Endothelial cell of umbilical vein (primary cell): ENCODE measurements at regions of chr14 and their contacts with region 1.

Region 1: GRCh38 chr14:61103481-61104339 is 122.7 kb downstream of the SLC38A6 start:
- DNase-seq: peak; percentile 94
- H3K4me3 ChIP-seq: peak overlapping the region in 1 of 3 experiments; percentile 17
- H3K27ac ChIP-seq: peak overlapping the region; percentile 100
- H3K4me1 ChIP-seq: peaks cover 66% of the 10 kb centered on the region
- H3K27me3 ChIP-seq: no peaks in the 10 kb centered on the region
- CTCF ChIP-seq: no peak
- POLR2A ChIP-seq: peak; percentile 52

Region 2: GRCh38 chr14:60656686-60657455 is 446.8 kb before region 1 on chr14:
- CTCF ChIA-PET with region 1: interaction called, 3 read pairs
- POLR2A ChIA-PET with region 1: no interaction called
- dilution Hi-C with region 1: no loop called
- intact Hi-C with region 1: loop called (anchors 2 kb)
- DNase-seq: peak; percentile 65
- H3K4me3 ChIP-seq: peak overlapping the region; percentile 22 to 64 (median 59)
- H3K27ac ChIP-seq: peak overlapping the region; percentile 3
- H3K4me1 ChIP-seq: peaks cover 10% of the 10 kb centered on the region
- H3K27me3 ChIP-seq: peaks cover 35 to 44% of the 10 kb centered on the region in 2 experiments
- CTCF ChIP-seq: peak; percentile 39 to 59
- POLR2A ChIP-seq: no peak

Region 3: DNA sequence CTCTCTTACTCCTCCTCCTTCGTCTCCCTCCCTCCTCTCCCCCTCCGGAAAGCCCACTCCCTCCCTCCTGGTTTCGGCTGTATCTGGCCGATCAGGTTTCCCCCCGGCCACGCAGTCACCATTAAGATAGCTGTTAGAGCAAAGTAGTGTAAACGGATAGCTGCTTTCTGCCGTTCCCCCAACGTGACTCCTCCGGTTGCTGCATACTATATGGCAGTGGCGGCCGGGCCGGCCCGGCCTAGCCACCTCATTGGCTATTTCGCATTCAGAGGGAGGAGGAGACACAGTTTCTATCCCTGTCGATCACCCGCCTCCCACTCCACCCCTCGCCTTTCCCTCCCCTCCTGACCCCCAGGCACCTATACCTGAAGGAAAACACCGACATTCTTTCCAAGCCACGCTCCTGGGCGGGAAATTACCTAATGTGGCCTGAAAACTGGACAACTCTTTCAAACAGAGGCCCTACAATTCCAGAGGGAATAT is 379.5 kb before region 1 on chr14 and contains the start of gene SIX4:
- CTCF ChIA-PET with region 1: no interaction called
- POLR2A ChIA-PET with region 1: no interaction called
- dilution Hi-C with region 1: no loop called
- intact Hi-C with region 1: loop called (anchors 2 kb)
- DNase-seq: peak; percentile 85
- H3K4me3 ChIP-seq: peak within 1 kb of the TSS; percentile 81 to 94 (median 86)
- H3K27ac ChIP-seq: peak within 1 kb of the TSS; percentile 57
- H3K4me1 ChIP-seq: peaks cover 8% of the 10 kb centered on the region
- H3K27me3 ChIP-seq: peaks cover 9 to 16% of the 10 kb centered on the region in 2 experiments
- CTCF ChIP-seq: no peak
- POLR2A ChIP-seq: peak; percentile 75
- total RNA-seq, gene SIX4: 4.7 and 7.5 TPM in 2 replicates

Region 4: DNA sequence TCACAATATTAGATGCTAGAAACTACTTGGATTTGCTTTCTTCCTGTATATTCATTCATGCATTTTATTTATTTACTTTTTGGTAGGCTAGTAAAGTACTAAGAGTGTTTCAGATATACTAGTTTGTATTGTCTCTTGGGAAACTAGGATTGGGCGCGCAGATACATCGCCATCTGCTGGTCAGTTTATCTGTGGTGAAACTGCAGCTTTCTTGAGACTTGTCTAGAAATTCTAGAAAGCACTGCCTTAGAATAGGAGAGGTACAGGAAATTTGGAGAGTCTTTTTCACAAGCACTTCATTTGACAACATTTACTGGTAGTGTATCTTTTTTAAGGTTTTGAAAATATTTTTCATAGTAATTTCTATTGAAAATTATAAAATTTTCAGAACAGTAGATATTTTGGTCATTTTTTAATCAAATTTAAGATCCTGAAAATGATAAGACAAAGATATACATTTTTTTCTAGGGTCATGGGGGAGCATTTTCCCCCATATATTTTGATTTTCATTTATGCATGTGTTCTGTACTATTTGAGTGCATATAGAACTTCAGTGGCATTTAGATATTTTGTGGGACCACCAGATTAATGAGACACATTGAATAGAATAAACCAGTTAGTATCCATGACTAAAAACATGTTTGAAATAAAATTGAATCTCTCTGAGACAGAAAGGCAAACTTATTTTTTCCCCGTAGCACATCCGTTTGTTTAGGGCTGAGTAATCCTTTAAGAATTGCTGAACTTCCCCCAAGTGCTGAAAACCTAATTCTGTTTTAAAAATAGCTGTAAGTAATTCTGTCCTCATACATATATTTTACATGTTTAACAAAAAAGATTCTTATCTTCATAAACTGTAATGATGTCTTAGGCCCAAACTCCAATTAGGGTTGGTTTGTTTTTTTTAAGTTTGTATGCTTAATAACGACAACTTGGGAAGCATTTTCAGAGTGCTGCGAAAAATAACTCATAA is 78.2 kb before region 1 on chr14:
- CTCF ChIA-PET with region 1: interaction called, 4 read pairs
- POLR2A ChIA-PET with region 1: no interaction called
- dilution Hi-C with region 1: no loop called
- intact Hi-C with region 1: loop called (anchors 1 kb)
- DNase-seq: peak; percentile 80
- H3K4me3 ChIP-seq: peak overlapping the region in 1 of 3 experiments; percentile 46
- H3K27ac ChIP-seq: peak overlapping the region; percentile 89
- H3K4me1 ChIP-seq: peaks cover 21% of the 10 kb centered on the region
- H3K27me3 ChIP-seq: no peaks in the 10 kb centered on the region
- CTCF ChIP-seq: peak; percentile 66 to 68
- POLR2A ChIP-seq: no peak

Region 5: GRCh38 chr14:61125867-61126572 is 22.3 kb after region 1 on chr14:
- CTCF ChIA-PET with region 1: interaction called, 4 read pairs
- POLR2A ChIA-PET with region 1: interaction called, 3 read pairs
- dilution Hi-C with region 1: no loop called
- intact Hi-C with region 1: loop called (anchors 1 kb)
- DNase-seq: peak; percentile 80
- H3K4me3 ChIP-seq: no peak overlapping the region
- H3K27ac ChIP-seq: peak overlapping the region; percentile 36
- H3K4me1 ChIP-seq: peaks cover 37% of the 10 kb centered on the region
- H3K27me3 ChIP-seq: no peaks in the 10 kb centered on the region
- CTCF ChIP-seq: no peak
- POLR2A ChIP-seq: no peak

Region 6: GRCh38 chr14:61147831-61148549 is 44.3 kb after region 1 on chr14:
- CTCF ChIA-PET with region 1: interaction called, 9 read pairs
- POLR2A ChIA-PET with region 1: no interaction called
- dilution Hi-C with region 1: no loop called
- intact Hi-C with region 1: loop called (anchors 1 kb)
- DNase-seq: peak; percentile 85
- H3K4me3 ChIP-seq: no peak overlapping the region
- H3K27ac ChIP-seq: peak overlapping the region; percentile 84
- H3K4me1 ChIP-seq: peaks cover 28% of the 10 kb centered on the region
- H3K27me3 ChIP-seq: no peaks in the 10 kb centered on the region
- CTCF ChIP-seq: no peak
- POLR2A ChIP-seq: no peak

Region 7: GRCh38 chr14:61168141-61168540 is 64.4 kb after region 1 on chr14:
- CTCF ChIA-PET with region 1: no interaction called
- POLR2A ChIA-PET with region 1: no interaction called
- dilution Hi-C with region 1: no loop called
- intact Hi-C with region 1: no loop called
- DNase-seq: no peak
- H3K4me3 ChIP-seq: no peak overlapping the region
- H3K27ac ChIP-seq: no peak overlapping the region
- H3K4me1 ChIP-seq: no peaks in the 10 kb centered on the region
- H3K27me3 ChIP-seq: no peaks in the 10 kb centered on the region
- CTCF ChIP-seq: no peak
- POLR2A ChIP-seq: no peak

Region 8: DNA sequence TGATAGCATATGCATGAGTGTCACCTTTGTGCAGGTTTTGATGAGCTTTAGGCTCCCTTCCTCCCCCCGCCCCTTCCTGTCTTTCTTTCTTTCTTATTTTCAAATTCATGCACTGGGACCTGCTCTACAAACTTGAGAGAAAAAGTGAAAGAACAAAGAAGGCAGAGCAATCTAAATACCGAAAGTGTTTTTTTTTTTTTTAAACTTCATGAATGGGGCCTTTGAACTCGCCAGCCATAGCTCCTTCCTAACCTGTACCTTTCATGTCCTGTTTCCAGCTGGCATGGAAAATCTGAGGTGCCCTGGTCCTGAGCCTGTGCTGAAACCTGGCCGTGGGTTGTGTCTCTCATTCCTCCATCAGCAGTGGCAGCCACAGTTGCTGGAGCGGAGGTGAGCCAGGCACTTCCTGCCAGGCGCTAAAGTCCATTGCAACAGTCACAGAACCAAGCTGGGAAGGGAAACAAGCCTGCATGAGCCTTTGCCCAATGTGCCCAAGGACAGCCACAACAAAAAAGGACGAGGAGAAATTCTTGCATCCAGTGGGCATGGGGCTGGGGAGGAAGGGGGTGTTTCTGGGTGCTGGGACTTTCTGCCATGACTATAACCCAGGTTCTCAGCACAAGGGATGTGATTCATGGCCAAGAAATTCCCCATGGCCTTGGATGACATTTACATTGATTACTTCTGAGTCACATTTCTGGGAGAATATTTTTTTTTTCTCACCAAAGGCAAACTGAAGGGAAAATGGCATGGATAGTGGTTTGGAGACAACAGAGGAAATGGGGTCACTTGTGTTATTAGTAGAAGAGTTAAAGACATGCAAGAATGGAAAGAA is 74.7 kb after region 1 on chr14:
- CTCF ChIA-PET with region 1: no interaction called
- POLR2A ChIA-PET with region 1: no interaction called
- dilution Hi-C with region 1: no loop called
- intact Hi-C with region 1: loop called (anchors 1 kb)
- DNase-seq: peak; percentile 95
- H3K4me3 ChIP-seq: peak overlapping the region in 1 of 3 experiments; percentile 42
- H3K27ac ChIP-seq: peak overlapping the region; percentile 99
- H3K4me1 ChIP-seq: peaks cover 40% of the 10 kb centered on the region
- H3K27me3 ChIP-seq: no peaks in the 10 kb centered on the region
- CTCF ChIP-seq: no peak
- POLR2A ChIP-seq: peak; percentile 45

Region 9: DNA sequence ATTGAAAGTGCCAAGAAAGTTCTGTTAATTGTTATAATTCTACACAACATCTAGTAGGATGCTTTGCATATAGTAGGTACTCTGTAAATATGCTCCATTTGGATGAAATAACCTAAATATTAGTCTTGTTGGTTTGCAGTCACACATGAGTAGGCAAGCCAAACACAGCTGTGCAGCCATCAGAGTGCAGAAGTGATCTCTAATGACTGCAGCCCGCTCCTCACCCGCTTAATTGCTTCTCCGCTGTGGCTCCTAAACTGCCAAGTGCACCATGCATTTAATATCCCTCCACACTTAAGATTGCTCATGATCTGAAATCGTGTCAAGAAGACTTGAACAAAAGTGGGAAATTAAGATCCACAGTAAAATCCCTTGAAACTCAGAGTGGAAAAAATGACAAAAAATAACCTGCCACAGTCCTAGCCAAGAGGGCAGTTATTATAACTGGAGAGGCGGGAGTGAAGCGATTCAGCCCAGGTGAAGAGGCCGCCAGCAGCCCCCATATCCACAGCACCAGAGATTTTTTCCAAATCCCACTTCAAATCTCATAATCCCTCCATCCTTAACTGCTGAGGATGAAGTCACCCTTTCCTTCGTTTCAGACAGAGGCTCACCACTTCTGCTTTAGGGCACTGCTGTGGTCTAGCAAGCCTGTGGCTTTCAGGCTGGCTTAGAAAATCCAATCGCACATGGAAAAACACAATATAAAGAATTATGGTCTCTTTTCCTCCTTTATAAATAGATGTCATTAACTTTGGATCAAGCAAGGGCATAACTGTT is 108.0 kb after region 1 on chr14:
- CTCF ChIA-PET with region 1: no interaction called
- POLR2A ChIA-PET with region 1: no interaction called
- dilution Hi-C with region 1: no loop called
- intact Hi-C with region 1: no loop called
- DNase-seq: no peak
- H3K4me3 ChIP-seq: no peak overlapping the region
- H3K27ac ChIP-seq: no peak overlapping the region
- H3K4me1 ChIP-seq: no peaks in the 10 kb centered on the region
- H3K27me3 ChIP-seq: no peaks in the 10 kb centered on the region
- CTCF ChIP-seq: no peak
- POLR2A ChIP-seq: no peak